ENCODE measurements at regions of chr14 and their contacts with region 1.

Region 1: GRCh38 chr14:49620182-49621113 is at the starts of genes MGAT2 and RPL36AL:
- DNase-seq: peak; percentile 91
- ATAC-seq: peak; percentile 96
- H3K4me3 ChIP-seq: peak within 1 kb of the TSS; percentile 92 to 95
- H3K27ac ChIP-seq: peak within 1 kb of the TSS; percentile 97
- H3K4me1 ChIP-seq: peaks cover 18% of the 10 kb centered on the region
- H3K27me3 ChIP-seq: no peaks in the 10 kb centered on the region
- CTCF ChIP-seq: no peak; the same call in 1 of the 2 replicates
- total RNA-seq, gene MGAT2: 51.4 TPM
- total RNA-seq, gene RPL36AL: 136 TPM

Region 2: DNA sequence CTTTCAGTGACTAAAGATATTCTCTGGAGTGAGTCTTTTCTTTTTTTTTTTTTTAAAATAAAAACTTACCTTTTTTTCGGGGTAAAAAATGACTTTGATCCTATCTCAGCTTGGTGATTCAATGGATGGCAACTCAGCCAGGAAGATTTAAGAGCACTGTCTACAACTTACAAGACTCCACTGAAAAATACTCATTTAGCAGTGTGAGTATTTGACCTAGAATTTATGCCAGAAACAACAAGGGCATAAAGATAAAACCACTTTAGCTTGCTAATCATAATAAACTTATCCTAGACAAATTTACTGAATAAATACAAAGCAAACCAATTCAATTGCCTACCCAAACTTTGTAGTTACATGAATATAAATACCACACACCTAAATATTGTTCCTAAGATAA is 480.9 kb before region 1 on chr14:
- CTCF ChIA-PET with region 1: no interaction called
- POLR2A ChIA-PET with region 1: no interaction called
- in situ Hi-C with region 1: no loop called
- intact Hi-C with region 1: no loop called
- DNase-seq: no peak
- ATAC-seq: no peak
- H3K4me3 ChIP-seq: no peak overlapping the region
- H3K27ac ChIP-seq: no peak overlapping the region
- H3K4me1 ChIP-seq: no peaks in the 10 kb centered on the region
- H3K27me3 ChIP-seq: no peaks in the 10 kb centered on the region
- CTCF ChIP-seq: no peak

Region 3: GRCh38 chr14:49633640-49634546 is 13.4 kb after region 1 on chr14:
- CTCF ChIA-PET with region 1: no interaction called
- POLR2A ChIA-PET with region 1: interaction called, 12 read pairs
- in situ Hi-C with region 1: no loop called
- intact Hi-C with region 1: no loop called
- DNase-seq: peak; percentile 61
- ATAC-seq: peak; percentile 93
- H3K4me3 ChIP-seq: peak overlapping the region; percentile 75 to 92
- H3K27ac ChIP-seq: peak overlapping the region; percentile 96
- H3K4me1 ChIP-seq: no peaks in the 10 kb centered on the region
- H3K27me3 ChIP-seq: no peaks in the 10 kb centered on the region
- CTCF ChIP-seq: peak; percentile 89

Region 4: GRCh38 chr14:49828640-49829039 is 208.2 kb after region 1 on chr14:
- CTCF ChIA-PET with region 1: no interaction called
- POLR2A ChIA-PET with region 1: no interaction called
- in situ Hi-C with region 1: no loop called
- intact Hi-C with region 1: no loop called
- DNase-seq: no peak
- ATAC-seq: no peak
- H3K4me3 ChIP-seq: no peak overlapping the region
- H3K27ac ChIP-seq: no peak overlapping the region
- H3K4me1 ChIP-seq: no peaks in the 10 kb centered on the region
- H3K27me3 ChIP-seq: no peaks in the 10 kb centered on the region
- CTCF ChIP-seq: no peak

Region 5: DNA sequence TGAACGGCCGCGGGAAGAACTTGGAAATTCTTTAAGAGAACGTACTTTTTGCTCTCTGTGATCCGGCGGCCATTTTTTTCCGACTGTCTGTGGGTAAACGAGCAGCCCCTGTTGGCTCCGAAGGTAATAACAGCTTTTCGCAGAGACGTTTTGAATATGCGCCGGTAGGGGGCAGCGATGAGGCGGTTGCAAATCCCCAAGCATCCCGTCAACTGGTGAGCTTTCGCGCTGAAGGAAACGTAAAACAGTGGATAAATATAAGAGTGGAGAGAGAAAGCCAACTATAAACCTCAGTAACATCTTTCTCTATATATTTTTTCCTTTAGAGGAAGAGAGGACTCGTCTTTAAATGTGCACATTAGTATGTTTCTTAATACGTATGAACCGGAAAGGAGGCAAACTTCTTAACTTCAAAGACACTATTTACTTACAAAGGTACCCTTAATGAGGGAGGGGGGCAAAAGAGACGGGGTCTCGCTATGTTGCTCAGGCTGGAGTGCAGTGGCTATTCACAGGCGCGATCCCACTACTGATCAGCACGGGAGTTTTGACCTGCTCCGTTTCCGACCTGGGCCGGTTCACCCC is 241.7 kb after region 1 on chr14:
- CTCF ChIA-PET with region 1: no interaction called
- POLR2A ChIA-PET with region 1: interaction called, 17 read pairs
- in situ Hi-C with region 1: no loop called
- intact Hi-C with region 1: no loop called
- DNase-seq: peak; percentile 93
- ATAC-seq: peak; percentile 72
- H3K4me3 ChIP-seq: peak overlapping the region; percentile 82 to 93
- H3K27ac ChIP-seq: peak overlapping the region; percentile 98
- H3K4me1 ChIP-seq: peaks cover 16% of the 10 kb centered on the region
- H3K27me3 ChIP-seq: no peaks in the 10 kb centered on the region
- CTCF ChIP-seq: peak; percentile 100

Measured in Panc1 (cell line).